Activated CD4-positive, alpha-beta memory T cell treated with anti-CD3 and anti-CD28 coated beads for 36 hours (primary cell): ENCODE measurements at regions of chr5 and their contacts with region 1.

Region 1: DNA sequence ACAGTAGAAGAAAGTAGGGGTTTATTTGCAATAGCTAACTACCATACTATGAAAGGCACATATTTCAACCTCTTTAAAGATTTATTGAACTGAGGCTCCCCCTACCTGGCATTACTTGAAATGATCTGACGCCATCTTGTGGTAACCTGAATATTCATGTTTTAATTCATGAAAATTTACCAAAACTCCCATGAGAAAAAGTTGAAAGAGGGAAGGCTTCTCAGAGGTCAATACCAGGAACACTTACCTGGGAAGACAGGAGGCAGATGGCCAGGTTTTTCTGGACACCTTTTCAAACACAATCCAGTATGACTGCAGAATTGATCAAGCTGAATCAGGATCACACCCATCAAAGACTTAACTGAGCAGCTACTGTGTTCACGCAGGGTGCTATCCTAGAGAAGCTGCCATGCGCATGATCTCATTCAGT is 9.4 kb downstream of the PRELID2 start:
- DNase-seq: no peak
- H3K4me3 Mint-ChIP-seq: no peak overlapping the region
- H3K27ac Mint-ChIP-seq: no peak overlapping the region
- H3K4me1 Mint-ChIP-seq: peaks cover 2% of the 10 kb centered on the region
- H3K27me3 Mint-ChIP-seq: no peaks in the 10 kb centered on the region

Region 2: GRCh38 chr5:144203750-144204596 is 1621.8 kb before region 1 on chr5:
- CTCF ChIA-PET with region 1: interaction called, 47 read pairs
- POLR2A ChIA-PET with region 1: no interaction called
- intact Hi-C with region 1: loop called (anchors 1 kb)
- DNase-seq: peak; percentile 25
- H3K4me3 Mint-ChIP-seq: no peak overlapping the region
- H3K27ac Mint-ChIP-seq: no peak overlapping the region
- H3K4me1 Mint-ChIP-seq: peaks cover 19% of the 10 kb centered on the region
- H3K27me3 Mint-ChIP-seq: peaks cover 45% of the 10 kb centered on the region

Region 3: GRCh38 chr5:145681686-145682085 is 144.1 kb before region 1 on chr5:
- CTCF ChIA-PET with region 1: interaction called, 18 read pairs
- POLR2A ChIA-PET with region 1: no interaction called
- intact Hi-C with region 1: loop called (anchors 1 kb)
- DNase-seq: peak; percentile 43
- H3K4me3 Mint-ChIP-seq: no peak overlapping the region
- H3K27ac Mint-ChIP-seq: no peak overlapping the region
- H3K4me1 Mint-ChIP-seq: no peaks in the 10 kb centered on the region
- H3K27me3 Mint-ChIP-seq: no peaks in the 10 kb centered on the region

Region 4: GRCh38 chr5:145697251-145697990 is 128.3 kb before region 1 on chr5:
- CTCF ChIA-PET with region 1: interaction called, 20 read pairs
- POLR2A ChIA-PET with region 1: no interaction called
- intact Hi-C with region 1: loop called (anchors 1 kb)
- DNase-seq: peak; percentile 35
- H3K4me3 Mint-ChIP-seq: no peak overlapping the region
- H3K27ac Mint-ChIP-seq: no peak overlapping the region
- H3K4me1 Mint-ChIP-seq: no peaks in the 10 kb centered on the region
- H3K27me3 Mint-ChIP-seq: no peaks in the 10 kb centered on the region

Region 5: GRCh38 chr5:145811834-145812625 is 13.7 kb before region 1 on chr5:
- CTCF ChIA-PET with region 1: interaction called, 10 read pairs
- POLR2A ChIA-PET with region 1: no interaction called
- intact Hi-C with region 1: no loop called
- DNase-seq: no peak
- H3K4me3 Mint-ChIP-seq: no peak overlapping the region
- H3K27ac Mint-ChIP-seq: no peak overlapping the region
- H3K4me1 Mint-ChIP-seq: no peaks in the 10 kb centered on the region
- H3K27me3 Mint-ChIP-seq: no peaks in the 10 kb centered on the region

Region 6: DNA sequence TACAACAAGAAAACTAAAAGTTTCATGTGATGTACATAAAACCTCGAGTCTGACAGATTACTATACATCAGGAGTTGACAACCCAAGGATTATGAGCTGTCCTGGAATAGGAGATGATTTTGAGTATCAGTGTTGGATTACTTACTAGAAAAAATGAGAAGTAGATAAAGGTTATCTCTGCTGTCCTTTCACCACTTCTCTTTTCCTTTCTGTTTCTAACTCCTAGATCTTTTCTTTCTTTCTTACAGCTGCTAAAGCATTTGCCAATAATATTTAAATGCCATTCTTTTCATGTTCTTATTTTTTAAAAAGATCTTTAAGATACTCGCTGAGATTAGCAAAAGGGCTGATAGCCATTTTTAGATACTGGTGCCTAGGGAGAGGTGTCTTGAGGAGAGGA is 392.4 kb after region 1 on chr5:
- CTCF ChIA-PET with region 1: no interaction called
- POLR2A ChIA-PET with region 1: no interaction called
- intact Hi-C with region 1: no loop called
- DNase-seq: no peak
- H3K4me3 Mint-ChIP-seq: no peak overlapping the region
- H3K27ac Mint-ChIP-seq: no peak overlapping the region
- H3K4me1 Mint-ChIP-seq: peaks cover 28% of the 10 kb centered on the region
- H3K27me3 Mint-ChIP-seq: no peaks in the 10 kb centered on the region

Region 7: GRCh38 chr5:146633323-146633764 is 807.6 kb after region 1 on chr5:
- CTCF ChIA-PET with region 1: no interaction called
- POLR2A ChIA-PET with region 1: no interaction called
- intact Hi-C with region 1: no loop called
- DNase-seq: no peak
- H3K4me3 Mint-ChIP-seq: no peak overlapping the region
- H3K27ac Mint-ChIP-seq: no peak overlapping the region
- H3K4me1 Mint-ChIP-seq: no peaks in the 10 kb centered on the region
- H3K27me3 Mint-ChIP-seq: peaks cover 1% of the 10 kb centered on the region